ENCODE measurements at regions of chr1 and their contacts with region 1.

Region 1: GRCh38 chr1:248696261-248696660 is 6.3 kb downstream of the OR14I1 start:
- DNase-seq: no peak
- ATAC-seq: peak in 3 of 4 donors; percentile 57 to 73 (median 71)
- H3K4me3 ChIP-seq: no peak overlapping the region
- H3K27ac ChIP-seq: no peak overlapping the region
- H3K4me1 ChIP-seq: no peaks in the 10 kb centered on the region
- H3K27me3 ChIP-seq: no peaks in the 10 kb centered on the region
- CTCF ChIP-seq: no peak

Region 2: GRCh38 chr1:248521859-248522258 is 174.4 kb before region 1 on chr1:
- intact Hi-C with region 1: no loop called
- DNase-seq: peak in 1 of 6 donors; percentile 22
- ATAC-seq: no peak
- H3K4me3 ChIP-seq: no peak overlapping the region
- H3K27ac ChIP-seq: no peak overlapping the region
- H3K4me1 ChIP-seq: no peaks in the 10 kb centered on the region
- H3K27me3 ChIP-seq: no peaks in the 10 kb centered on the region
- CTCF ChIP-seq: no peak

Region 3: GRCh38 chr1:248622570-248623001 is 73.7 kb before region 1 on chr1:
- intact Hi-C with region 1: loop called in 1 of 3 experiments (anchors 10 kb)
- DNase-seq: no peak
- ATAC-seq: peak in 3 of 4 donors; percentile 87 to 91 (median 88)
- H3K4me3 ChIP-seq: no peak overlapping the region
- H3K27ac ChIP-seq: no peak overlapping the region
- H3K4me1 ChIP-seq: no peaks in the 10 kb centered on the region
- H3K27me3 ChIP-seq: no peaks in the 10 kb centered on the region
- CTCF ChIP-seq: peak in 3 of 4 donors; percentile 54 to 60 (median 57)